ENCODE measurements at regions of chr15 and their contacts with region 1.

Region 1: DNA sequence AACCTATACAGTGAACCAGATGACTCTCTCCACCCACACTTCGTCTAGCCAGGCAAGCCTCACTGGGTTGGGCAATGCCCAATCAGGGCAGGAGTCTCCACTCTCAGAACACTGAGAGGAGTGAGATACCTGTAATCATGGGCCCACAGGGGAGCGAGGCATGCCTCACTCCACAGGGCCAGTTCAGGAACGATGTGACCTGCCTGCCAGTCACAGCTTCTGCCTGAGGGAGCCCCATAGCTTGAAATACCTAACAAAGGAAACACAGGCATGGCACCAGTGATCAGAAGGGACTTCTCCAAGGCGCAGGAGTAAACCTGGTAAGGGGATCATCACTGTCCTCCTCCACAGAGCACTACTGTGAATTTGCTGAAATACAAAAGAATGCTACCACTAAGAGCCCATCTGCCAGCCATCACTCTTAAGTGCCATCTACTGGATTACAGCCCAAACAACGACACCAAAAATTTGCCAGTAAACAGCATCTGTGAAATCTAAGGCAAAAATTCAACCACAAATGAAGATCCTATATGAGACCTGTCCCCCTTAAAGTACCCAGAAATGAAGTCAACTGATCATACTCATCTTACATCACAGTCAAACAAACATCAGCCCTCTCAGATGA is 689.9 kb upstream of the SEMA6D start:
- DNase-seq: no peak
- H3K4me3 ChIP-seq: no peak overlapping the region
- H3K27ac ChIP-seq: no peak overlapping the region
- H3K4me1 ChIP-seq: no peaks in the 10 kb centered on the region
- H3K27me3 ChIP-seq: no peaks in the 10 kb centered on the region
- CTCF ChIP-seq: no peak
- EP300 ChIP-seq: no peak
- POLR2A ChIP-seq: no peak

Region 2: DNA sequence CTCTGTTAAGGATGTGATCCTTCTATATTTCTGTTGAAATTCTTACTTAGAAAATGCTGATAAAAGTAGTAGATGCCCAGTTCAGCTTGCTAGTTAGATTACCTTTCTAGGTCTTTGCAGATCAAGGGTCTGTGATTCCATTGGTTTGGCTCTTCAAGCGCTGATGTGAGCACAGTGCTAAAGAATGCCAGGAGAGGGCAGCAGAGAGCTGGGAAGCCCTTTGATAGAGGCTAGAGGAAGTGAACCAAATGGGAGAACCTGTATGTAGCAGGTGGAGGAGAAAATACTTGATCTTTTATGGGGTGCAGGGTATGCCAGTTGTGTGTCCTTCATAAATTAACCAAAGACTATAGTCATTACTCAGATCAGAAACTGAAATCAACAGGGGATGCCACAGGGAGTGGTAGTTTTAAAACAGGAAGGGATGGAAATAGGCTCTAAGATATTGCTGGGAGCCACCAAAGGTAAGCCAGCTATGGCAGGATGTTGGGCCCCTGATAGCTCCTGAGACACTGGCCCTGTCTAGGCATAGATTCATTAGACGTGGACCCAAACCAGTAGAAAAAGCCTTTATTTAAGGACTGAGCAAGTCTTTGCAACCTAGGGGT is 715.2 kb before region 1 on chr15:
- in situ Hi-C with region 1: loop called in 1 of 4 experiments (anchors 25 kb)
- intact Hi-C with region 1: no loop called
- DNase-seq: peak; percentile 84
- H3K4me3 ChIP-seq: no peak overlapping the region
- H3K27ac ChIP-seq: no peak overlapping the region
- H3K4me1 ChIP-seq: no peaks in the 10 kb centered on the region
- H3K27me3 ChIP-seq: no peaks in the 10 kb centered on the region
- CTCF ChIP-seq: peak; percentile 80 to 86 (median 82)
- EP300 ChIP-seq: no peak
- POLR2A ChIP-seq: no peak

Measured in transverse colon (tissue), 4 donors.